ENCODE measurements at regions of chr5 and their contacts with region 1.

Region 1: DNA sequence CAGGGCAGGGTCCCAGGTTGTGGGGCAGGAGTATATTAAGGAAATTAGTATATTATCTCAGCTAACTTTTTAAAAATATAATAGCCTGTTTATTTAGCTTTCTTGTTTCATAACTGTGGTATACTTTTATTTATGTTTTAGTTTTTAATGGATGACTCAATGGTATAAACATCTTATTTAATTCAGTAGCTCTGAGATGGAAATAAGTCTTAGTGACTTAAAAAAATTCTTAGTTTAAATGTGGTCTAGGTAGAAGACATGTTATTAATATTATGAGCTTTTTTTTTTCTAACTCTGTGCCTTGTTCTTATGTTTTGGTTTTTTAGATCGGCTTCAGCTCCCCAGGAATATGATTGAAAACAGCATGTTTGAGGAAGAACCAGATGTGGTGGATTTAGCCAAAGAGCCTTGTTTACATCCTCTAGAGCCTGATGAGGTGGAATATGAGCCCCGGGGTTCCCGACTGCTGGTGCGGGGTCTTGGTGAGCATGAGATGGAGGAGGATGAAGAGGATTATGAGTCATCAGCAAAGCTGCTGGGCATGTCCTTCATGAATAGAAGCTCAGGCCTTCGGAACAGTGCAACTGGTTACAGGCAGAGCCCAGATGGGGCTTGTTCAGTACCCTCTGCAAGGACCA is 43.1 kb downstream of the LNPEP start:
- DNase-seq: no peak
- H3K4me3 ChIP-seq: no peak overlapping the region
- H3K27ac ChIP-seq: no peak overlapping the region
- H3K4me1 ChIP-seq: peaks cover 21% of the 10 kb centered on the region
- CTCF ChIP-seq: no peak

Region 2: DNA sequence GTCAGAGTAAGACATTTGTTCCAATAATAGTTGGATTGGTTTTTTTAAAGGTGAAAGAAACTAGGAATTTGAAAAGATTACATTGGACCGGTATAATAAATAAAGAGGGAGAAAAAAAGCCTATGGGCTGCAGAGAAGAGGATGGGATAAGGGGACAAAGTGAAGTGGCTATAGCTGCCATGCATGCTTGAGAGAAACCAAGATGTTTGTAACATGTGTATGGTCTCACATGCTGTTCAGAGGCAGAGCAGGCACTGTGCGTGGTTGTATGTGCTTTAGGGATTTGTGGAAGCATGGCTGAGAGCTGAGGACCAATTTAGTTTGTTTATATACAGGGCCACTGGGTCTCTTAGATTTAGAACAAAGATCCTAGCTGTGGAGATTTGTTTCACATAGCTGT is 10.3 kb before region 1 on chr5:
- CTCF ChIA-PET with region 1: no interaction called
- POLR2A ChIA-PET with region 1: interaction called, 14 read pairs
- intact Hi-C with region 1: no loop called
- DNase-seq: peak; percentile 19
- H3K4me3 ChIP-seq: no peak overlapping the region
- H3K27ac ChIP-seq: peak overlapping the region; percentile 33
- H3K4me1 ChIP-seq: peaks cover 81% of the 10 kb centered on the region
- CTCF ChIP-seq: no peak